Adrenal gland (tissue), 19 donors: ENCODE measurements at regions of chr10 and their contacts with region 1.

Region 1: GRCh38 chr10:44386546-44387052 is 1.7 kb upstream of the CXCL12 start:
- DNase-seq: peak in 6 of 7 donors; percentile 38 to 66 (median 61)
- H3K4me3 ChIP-seq: no peak overlapping the region
- H3K27ac ChIP-seq: no peak overlapping the region
- H3K4me1 ChIP-seq: peaks cover 0 to 8% of the 10 kb centered on the region in 2 donors
- H3K27me3 ChIP-seq: peaks cover 16% of the 10 kb centered on the region
- CTCF ChIP-seq: peak; percentile 60 to 88 (median 82)
- POLR2A ChIP-seq: no peak

Region 2: GRCh38 chr10:43671656-43672531 is 714.7 kb before region 1 on chr10:
- intact Hi-C with region 1: loop called (anchors 2 to 5 kb)
- DNase-seq: peak; percentile 45 to 75 (median 61)
- H3K4me3 ChIP-seq: no peak overlapping the region
- H3K27ac ChIP-seq: no peak overlapping the region
- H3K4me1 ChIP-seq: peaks cover 0 to 3% of the 10 kb centered on the region in 2 donors
- H3K27me3 ChIP-seq: peaks cover 16% of the 10 kb centered on the region
- CTCF ChIP-seq: peak; percentile 77 to 92 (median 84)
- POLR2A ChIP-seq: no peak

Region 3: DNA sequence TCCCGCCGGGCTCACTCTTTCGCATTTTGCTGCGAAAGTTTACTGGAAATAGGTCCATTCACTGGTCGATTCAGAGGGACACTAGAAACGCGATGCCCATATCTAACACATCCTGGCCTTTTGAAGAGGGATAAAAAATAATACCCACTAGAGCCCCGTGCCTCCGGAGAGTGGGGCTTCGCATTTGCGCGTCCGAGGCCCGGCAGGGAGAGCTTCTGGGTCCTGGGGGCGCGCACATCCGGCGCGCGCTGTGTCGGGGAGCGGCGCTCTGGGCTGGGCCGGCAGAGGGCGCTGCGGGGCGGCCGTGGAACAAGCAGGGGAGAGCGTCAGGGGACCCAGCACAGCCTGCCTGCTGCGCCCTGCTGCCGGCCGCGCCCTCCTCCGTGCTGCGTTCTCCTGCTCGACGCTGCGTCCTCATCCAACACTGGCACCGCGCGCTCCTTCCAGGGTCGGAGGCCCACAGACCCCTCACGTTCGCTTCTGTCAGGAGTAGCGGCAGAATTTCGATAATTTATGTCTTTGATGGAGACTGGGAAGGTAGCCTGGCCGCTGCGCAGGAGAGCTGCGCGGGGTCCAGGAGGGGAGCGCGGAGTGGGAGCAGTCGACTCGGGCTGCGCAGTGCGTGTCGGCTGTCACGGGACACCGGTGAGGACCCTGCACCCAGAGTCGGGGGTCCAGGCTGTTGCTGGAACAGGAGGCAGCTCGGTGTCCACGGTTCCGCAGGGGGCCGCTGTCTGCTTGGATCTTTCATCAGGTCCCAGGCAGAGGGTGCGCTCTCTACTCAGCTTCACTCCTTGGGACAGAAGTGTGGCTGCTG is 696.4 kb before region 1 on chr10:
- intact Hi-C with region 1: loop called (anchors 5 kb)
- DNase-seq: peak; percentile 74 to 84 (median 80)
- H3K4me3 ChIP-seq: peak overlapping the region in 3 of 4 donors; percentile 13 to 47 (median 35)
- H3K27ac ChIP-seq: peak overlapping the region in 2 of 5 donors; percentile 21 to 47
- H3K4me1 ChIP-seq: peaks cover 3 to 12% of the 10 kb centered on the region in 2 donors
- H3K27me3 ChIP-seq: no peaks in the 10 kb centered on the region
- CTCF ChIP-seq: peak; percentile 60 to 93 (median 80)
- POLR2A ChIP-seq: no peak

Region 4: DNA sequence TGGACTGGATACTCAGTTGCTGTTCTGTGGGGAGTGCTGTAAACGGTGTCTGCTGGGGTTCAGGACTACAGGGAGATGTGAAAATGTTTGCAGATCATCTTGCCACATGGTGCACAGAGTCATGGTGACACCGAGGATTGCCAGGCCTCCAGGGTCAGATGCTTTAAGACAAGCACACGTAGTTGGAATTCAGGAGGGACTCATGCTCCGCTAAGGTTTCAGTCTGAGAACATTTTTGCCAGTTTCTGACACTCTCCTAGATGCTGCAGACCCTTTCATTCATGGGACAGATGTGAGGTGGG is 213.0 kb before region 1 on chr10:
- intact Hi-C with region 1: no loop called
- DNase-seq: no peak
- H3K4me3 ChIP-seq: no peak overlapping the region
- H3K27ac ChIP-seq: no peak overlapping the region
- H3K4me1 ChIP-seq: no peaks in the 10 kb centered on the region
- H3K27me3 ChIP-seq: no peaks in the 10 kb centered on the region
- CTCF ChIP-seq: no peak
- POLR2A ChIP-seq: no peak

Region 5: GRCh38 chr10:44552726-44553125 is 166.1 kb after region 1 on chr10:
- intact Hi-C with region 1: no loop called
- DNase-seq: no peak
- H3K4me3 ChIP-seq: no peak overlapping the region
- H3K27ac ChIP-seq: no peak overlapping the region
- H3K4me1 ChIP-seq: no peaks in the 10 kb centered on the region
- H3K27me3 ChIP-seq: peaks cover 2% of the 10 kb centered on the region
- CTCF ChIP-seq: no peak
- POLR2A ChIP-seq: no peak

Region 6: DNA sequence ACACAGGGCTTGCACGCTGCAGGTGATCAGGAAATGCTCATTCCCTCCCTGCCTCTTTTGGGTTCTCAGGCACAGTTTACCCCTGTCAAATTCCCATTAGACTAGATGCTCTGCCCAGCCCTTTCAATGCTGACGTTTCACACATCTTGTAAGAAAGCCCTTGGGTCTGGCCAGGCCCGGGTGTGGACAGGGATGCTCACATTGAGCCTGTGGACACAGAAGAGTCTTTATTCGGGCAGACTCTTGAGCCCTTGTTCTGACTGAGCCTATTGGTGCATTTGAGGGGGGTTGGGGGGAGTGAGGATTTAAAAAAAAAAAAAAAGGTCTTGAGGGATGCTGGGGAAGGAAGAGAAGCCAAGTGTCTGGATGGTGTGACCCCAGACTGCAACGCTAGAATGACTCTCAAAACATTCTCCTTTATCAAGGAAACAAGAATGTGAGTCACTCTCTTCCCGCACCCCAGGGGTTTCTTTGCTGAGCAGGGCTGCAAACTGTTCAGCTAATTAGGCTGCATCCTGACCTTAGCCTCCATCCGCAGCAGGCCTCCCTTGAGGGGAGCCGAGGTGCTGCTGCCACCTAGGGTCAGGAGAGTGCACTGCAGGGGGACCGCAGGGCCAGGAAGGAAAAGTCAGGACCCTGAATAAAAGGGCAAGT is 470.9 kb after region 1 on chr10:
- intact Hi-C with region 1: loop called (anchors 5 to 10 kb)
- DNase-seq: peak; percentile 46 to 71 (median 54)
- H3K4me3 ChIP-seq: no peak overlapping the region
- H3K27ac ChIP-seq: no peak overlapping the region
- H3K4me1 ChIP-seq: no peaks in the 10 kb centered on the region
- H3K27me3 ChIP-seq: no peaks in the 10 kb centered on the region
- CTCF ChIP-seq: peak; percentile 87 to 99 (median 92)
- POLR2A ChIP-seq: no peak

Region 7: DNA sequence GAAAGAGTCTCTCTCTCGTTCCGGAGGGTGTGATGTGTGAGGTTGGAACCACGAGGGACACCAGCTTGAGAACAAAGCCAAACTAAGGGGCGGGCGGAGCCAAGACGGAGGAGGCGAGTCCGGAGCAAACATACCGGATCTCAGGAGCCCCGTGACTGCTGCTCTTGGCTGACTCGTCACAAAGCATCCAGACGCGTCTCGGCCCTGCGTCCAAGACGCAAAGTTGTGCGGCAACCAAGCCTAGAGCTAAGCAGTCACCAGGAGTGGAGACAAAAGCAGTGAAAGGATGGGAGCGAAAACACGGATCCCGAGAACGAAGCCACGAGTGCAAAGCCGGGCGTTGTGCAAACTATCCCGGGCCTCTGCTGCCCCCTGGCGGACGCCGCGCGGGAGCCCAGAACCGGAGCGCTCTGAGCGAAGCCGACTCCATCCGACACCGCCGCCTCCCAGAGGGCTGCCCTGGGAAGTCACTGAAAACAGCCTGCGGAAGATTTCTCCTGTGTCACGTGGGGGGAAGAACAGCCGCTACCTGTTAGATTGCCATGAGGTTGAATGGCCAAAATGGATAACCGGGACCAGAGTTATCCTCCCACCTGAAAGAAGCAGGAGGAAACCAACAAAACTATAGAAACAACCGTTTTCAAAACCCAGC is 478.2 kb after region 1 on chr10:
- intact Hi-C with region 1: loop called (anchors 5 to 10 kb)
- DNase-seq: peak; percentile 84 to 95 (median 91)
- H3K4me3 ChIP-seq: peak overlapping the region in 2 of 4 donors; percentile 24 to 50
- H3K27ac ChIP-seq: peak overlapping the region in 2 of 5 donors; percentile 41 to 56
- H3K4me1 ChIP-seq: peaks cover 0 to 9% of the 10 kb centered on the region in 2 donors
- H3K27me3 ChIP-seq: peaks cover 19% of the 10 kb centered on the region
- CTCF ChIP-seq: peak; percentile 91 to 99 (median 96)
- POLR2A ChIP-seq: no peak